ENCODE measurements at regions of chr14 and their contacts with region 1.

Region 1: GRCh38 chr14:60575008-60575407 is 66.1 kb downstream of the SIX6 start:
- DNase-seq: no peak
- ATAC-seq: no peak

Region 2: GRCh38 chr14:60839657-60840056 is 264.6 kb after region 1 on chr14:
- intact Hi-C with region 1: loop called (anchors 5 kb)
- DNase-seq: no peak
- ATAC-seq: no peak